ENCODE measurements at regions of chr10 and their contacts with region 1.

Region 1: GRCh38 chr10:50636618-50637579 is 13.1 kb upstream of the SGMS1 start:
- DNase-seq: peak; percentile 78
- ATAC-seq: peak; percentile 91
- H3K4me3 Mint-ChIP-seq: peak overlapping the region; percentile 63
- H3K27ac Mint-ChIP-seq: peak overlapping the region; percentile 81
- H3K4me1 Mint-ChIP-seq: peaks cover 41% of the 10 kb centered on the region
- H3K27me3 Mint-ChIP-seq: peaks cover 60% of the 10 kb centered on the region

Region 2: GRCh38 chr10:50614444-50615137 is 22.3 kb before region 1 on chr10:
- CTCF ChIA-PET with region 1: no interaction called
- DNase-seq: no peak
- ATAC-seq: no peak
- H3K4me3 Mint-ChIP-seq: no peak overlapping the region
- H3K27ac Mint-ChIP-seq: no peak overlapping the region
- H3K4me1 Mint-ChIP-seq: peaks cover 24% of the 10 kb centered on the region
- H3K27me3 Mint-ChIP-seq: no peaks in the 10 kb centered on the region

Region 3: DNA sequence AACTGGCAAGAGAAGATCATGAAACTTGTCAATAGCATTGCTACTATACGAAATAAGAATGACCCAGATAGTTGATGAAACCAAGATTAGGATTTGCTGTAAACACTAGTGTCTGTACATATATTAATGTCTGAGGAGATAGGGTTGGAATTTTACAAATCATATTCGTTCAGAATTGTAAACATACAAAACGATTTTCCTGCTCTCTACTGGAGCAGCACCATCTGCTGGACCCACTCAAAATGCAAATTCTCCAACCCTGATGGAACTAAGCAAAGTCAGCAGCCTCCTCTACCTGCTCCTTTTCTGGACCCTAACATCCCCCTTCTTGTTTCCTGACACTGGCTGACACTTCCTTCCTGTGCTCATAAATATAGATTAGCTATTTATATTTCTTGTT is 16.2 kb after region 1 on chr10:
- CTCF ChIA-PET with region 1: interaction called, 13 read pairs
- DNase-seq: no peak
- ATAC-seq: peak; percentile 53
- H3K4me3 Mint-ChIP-seq: no peak overlapping the region
- H3K27ac Mint-ChIP-seq: no peak overlapping the region
- H3K4me1 Mint-ChIP-seq: peaks cover 18% of the 10 kb centered on the region
- H3K27me3 Mint-ChIP-seq: no peaks in the 10 kb centered on the region

Measured in activated CD8-positive, alpha-beta memory T cell treated with anti-CD3 and anti-CD28 coated beads, Interleukin-2, amount 10 ng/mL, durations not matched to agents 7 days and 5 days (primary cell).